ENCODE measurements at regions of chr1 and their contacts with region 1.

Region 1: DNA sequence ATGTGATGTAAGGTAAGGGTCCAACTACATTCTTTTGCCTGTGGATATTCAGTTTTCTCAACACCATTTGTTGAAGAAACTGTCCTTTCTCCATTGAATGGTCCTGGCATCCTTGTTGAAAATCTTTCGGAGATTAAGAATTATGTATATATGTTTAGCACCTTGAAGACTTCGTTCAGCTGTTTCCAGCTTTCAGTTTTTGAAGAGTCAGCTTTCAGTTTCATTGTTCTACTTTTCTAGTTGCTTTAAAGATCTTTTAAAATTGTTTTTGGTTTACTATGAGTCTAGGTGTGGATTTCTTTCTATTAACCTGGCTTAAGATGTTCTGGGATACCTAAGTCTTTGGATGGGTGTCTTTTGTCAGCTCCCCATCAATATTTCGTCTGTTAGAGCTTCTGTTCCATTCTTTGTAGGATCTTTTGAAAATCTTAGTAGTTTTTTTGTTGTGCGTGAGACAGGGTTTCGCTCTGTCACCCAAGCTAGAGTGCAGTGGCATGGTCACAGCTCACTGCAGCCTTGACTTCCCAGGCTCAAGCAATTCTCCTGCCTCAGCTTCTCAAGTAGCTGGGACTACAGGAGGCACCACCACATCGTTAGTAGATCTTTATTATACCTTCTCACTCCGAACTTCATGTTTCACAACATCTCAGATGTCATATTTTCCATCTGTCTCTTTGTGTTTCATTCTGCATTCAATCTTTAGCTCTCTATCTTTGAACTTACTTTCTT is 353.5 kb upstream of the B3GALT2 start:
- DNase-seq: no peak
- ATAC-seq: no peak
- H3K4me3 ChIP-seq: no peak overlapping the region
- H3K27ac ChIP-seq: no peak overlapping the region
- H3K4me1 ChIP-seq: no peaks in the 10 kb centered on the region
- H3K27me3 ChIP-seq: no peaks in the 10 kb centered on the region
- CTCF ChIP-seq: no peak

Region 2: GRCh38 chr1:192580351-192580962 is 959.4 kb before region 1 on chr1:
- CTCF ChIA-PET with region 1: no interaction called
- POLR2A ChIA-PET with region 1: interaction called, 15 read pairs
- in situ Hi-C with region 1: no loop called
- intact Hi-C with region 1: no loop called
- DNase-seq: peak; percentile 47
- ATAC-seq: peak; percentile 87
- H3K4me3 ChIP-seq: no peak overlapping the region
- H3K27ac ChIP-seq: no peak overlapping the region
- H3K4me1 ChIP-seq: no peaks in the 10 kb centered on the region
- H3K27me3 ChIP-seq: no peaks in the 10 kb centered on the region
- CTCF ChIP-seq: peak; percentile 53